Naive thymus-derived CD4-positive, alpha-beta T cell (primary cell): ENCODE measurements at regions of chr11 and their contacts with region 1.

Region 1: DNA sequence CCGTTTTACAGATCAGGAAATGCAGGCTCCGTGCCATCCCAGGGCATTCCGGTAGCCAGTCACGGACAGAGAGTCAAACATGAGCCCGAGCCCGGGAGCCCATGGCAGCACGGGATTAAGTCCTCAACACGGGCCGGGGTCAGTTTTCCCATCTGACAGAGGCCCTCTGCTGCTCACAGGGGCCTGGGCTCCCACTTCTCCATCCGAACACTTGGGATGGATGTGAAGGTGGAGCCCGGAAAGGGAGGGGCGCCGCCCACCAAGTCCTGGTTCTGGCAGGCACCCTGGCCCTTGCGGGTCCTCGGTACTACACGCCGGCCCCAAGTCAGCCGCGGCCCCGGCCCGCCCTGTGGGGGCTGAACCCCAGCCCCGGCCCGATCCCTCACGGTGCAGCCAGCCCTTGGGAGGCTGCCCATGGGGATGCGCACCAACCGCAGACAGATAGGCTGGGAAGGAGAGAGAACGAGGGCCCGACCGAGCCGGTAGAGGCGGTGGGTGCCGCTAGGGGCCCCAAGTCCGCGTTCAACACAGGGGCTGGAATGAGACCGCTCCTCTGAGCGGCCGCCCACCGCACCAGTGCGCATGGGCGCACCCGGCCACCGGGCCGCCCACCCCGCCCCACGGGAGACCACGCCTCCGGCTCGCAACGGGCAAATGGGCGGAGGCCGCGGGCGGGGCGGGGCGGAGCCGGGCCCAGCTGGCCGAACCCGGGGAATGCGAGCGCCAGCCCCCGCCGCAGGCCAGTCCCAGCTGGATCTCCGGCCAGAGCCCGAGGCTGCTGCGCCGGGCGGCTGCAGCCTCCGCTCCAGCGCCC is at the start of gene CAPN5:
- DNase-seq: peak; percentile 72 to 93 (median 85)
- ATAC-seq: peak; percentile 98
- H3K4me3 ChIP-seq: peak within 1 kb of the TSS; percentile 73
- H3K4me3 Mint-ChIP-seq: peak within 1 kb of the TSS; percentile 81 to 95 (median 87)
- H3K27ac ChIP-seq: peak within 1 kb of the TSS; percentile 73
- H3K27ac Mint-ChIP-seq: peak within 1 kb of the TSS in 8 of 9 donors; percentile 49 to 95 (median 82)
- H3K4me1 ChIP-seq: peaks cover 0 to 9% of the 10 kb centered on the region in 2 donors
- H3K4me1 Mint-ChIP-seq: peaks cover 5 to 28% (median 21%) of the 10 kb centered on the region in 7 donors
- H3K27me3 ChIP-seq: no peaks in the 10 kb centered on the region
- H3K27me3 Mint-ChIP-seq: peaks cover 0 to 32% (median 0%) of the 10 kb centered on the region in 5 donors
- total RNA-seq, gene CAPN5: 0.94 to 5.8 (median 5.6) TPM

Region 2: DNA sequence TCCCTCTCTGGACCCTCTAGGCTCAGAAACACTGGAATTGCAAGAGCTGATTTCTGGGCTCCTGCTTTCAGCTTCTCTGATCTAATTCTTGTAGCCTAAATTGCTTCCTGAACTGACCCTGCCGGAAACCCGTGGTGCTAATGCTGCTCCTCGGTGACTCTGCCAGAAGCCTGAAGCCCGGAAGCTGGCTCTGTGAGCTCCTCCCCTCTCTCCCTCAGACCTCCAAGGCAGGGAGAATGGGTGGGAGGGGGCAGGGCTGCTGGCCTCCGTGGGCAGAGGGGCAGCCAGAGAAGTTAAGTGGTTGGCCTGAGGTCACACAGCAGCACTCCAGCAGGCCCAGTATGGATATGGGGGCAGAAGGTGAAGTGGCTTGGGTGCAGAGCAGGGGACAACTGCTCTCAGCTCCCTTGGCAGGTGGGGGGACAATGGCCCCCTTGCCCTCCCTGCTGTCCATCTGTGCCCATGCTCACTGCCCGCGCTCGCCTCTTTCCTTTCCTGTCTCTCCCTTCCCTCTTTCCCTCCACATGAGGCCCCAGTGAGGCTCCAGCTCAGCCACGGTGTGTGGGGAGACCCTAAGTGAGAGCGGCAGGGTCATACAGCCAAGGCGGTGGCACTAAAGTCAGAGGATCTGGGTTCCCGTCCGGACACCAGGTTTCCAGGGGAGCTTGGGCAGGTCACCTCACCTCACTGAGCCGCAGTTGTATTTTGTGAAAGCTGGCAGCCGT is 16.6 kb after region 1 on chr11:
- CTCF ChIA-PET with region 1: interaction called, 4 read pairs
- POLR2A ChIA-PET with region 1: interaction called, 8 read pairs
- intact Hi-C with region 1: loop called (anchors 1 to 2 kb)
- DNase-seq: peak in 8 of 9 donors; percentile 42 to 66 (median 60)
- ATAC-seq: peak; percentile 83
- H3K4me3 ChIP-seq: peak overlapping the region; percentile 44
- H3K4me3 Mint-ChIP-seq: peak overlapping the region; percentile 77 to 93 (median 82)
- H3K27ac ChIP-seq: peak overlapping the region; percentile 78
- H3K27ac Mint-ChIP-seq: peak overlapping the region; percentile 94 to 98 (median 98)
- H3K4me1 ChIP-seq: peaks cover 7 to 17% of the 10 kb centered on the region in 2 donors
- H3K4me1 Mint-ChIP-seq: peaks cover 6 to 37% (median 21%) of the 10 kb centered on the region in 7 donors
- H3K27me3 ChIP-seq: no peaks in the 10 kb centered on the region
- H3K27me3 Mint-ChIP-seq: peaks cover 0 to 5% (median 0%) of the 10 kb centered on the region in 5 donors

Region 3: DNA sequence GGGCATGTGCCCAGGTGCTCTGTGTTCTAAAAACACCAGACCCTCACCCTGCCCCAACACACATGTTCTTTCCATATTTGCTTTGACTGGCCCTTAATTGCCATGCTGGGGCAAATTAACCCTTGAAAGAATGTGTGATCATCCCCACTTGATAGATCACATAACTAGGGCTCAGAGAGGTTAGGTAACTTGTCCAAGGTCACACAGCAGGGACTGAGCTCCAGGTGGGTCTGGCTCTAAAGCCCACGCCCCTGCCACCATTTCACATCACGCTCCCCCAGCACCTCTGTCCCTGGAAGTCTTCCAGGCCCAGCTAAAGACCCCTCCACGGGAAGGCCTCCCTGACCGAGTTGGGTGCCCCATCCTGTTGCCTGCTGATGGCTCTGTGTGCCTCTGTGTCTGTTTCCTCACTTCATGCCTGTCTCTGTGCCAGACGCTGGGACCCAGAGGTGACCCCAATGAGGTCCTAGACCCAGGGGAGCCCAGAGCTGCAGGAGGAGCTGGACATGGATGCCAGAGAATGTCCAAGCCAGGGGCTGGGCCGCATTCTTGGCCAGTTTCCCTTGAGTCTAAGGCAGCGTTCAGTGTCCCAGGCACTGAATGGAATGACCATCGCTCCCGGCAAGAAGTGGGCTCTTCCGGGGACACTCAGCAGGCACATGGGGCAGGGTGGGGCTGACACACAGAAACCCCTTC is 141.3 kb after region 1 on chr11:
- CTCF ChIA-PET with region 1: no interaction called
- POLR2A ChIA-PET with region 1: no interaction called
- intact Hi-C with region 1: no loop called
- DNase-seq: no peak
- ATAC-seq: no peak
- H3K4me3 ChIP-seq: no peak overlapping the region
- H3K4me3 Mint-ChIP-seq: no peak overlapping the region
- H3K27ac ChIP-seq: no peak overlapping the region
- H3K27ac Mint-ChIP-seq: no peak overlapping the region
- H3K4me1 ChIP-seq: no peaks in the 10 kb centered on the region
- H3K4me1 Mint-ChIP-seq: peaks cover 0 to 5% (median 0%) of the 10 kb centered on the region in 7 donors
- H3K27me3 ChIP-seq: no peaks in the 10 kb centered on the region
- H3K27me3 Mint-ChIP-seq: no peaks in the 10 kb centered on the region

Region 4: DNA sequence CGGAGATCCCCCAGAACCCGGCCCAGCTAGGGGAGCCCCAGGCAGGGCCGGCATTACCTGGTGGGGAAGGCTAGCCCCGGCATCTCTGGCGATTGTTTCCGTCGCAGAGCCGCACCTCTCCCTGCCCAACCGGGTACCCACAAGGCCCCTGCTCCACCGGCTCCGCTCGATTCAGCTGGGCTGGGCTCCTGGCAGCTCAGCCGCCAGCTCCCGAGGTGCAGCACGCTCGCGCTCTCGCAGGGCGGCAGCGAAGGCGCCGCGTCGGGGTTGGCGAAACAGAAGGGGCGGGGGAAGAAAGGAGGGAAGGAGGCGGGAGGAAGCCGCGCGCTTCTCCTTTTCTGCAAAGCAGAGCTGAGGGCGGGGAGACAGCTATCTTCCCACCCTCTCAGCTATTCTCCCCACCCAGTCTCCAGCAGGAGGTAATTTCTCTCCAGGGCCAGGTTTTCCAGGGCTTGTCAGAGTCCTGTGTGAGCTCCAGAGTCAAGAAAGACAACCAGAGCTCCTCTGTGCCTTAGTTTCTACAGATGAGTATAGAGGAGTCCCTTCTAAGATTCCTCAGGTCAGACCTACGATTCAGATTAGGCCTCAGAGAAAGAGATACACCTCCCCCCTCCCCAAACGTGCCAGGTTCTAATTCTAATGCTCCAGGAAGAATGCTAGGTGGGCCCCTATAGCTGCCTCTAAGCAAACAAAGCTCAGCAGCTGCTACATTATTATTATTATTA is 345.4 kb after region 1 on chr11:
- CTCF ChIA-PET with region 1: no interaction called
- POLR2A ChIA-PET with region 1: no interaction called
- intact Hi-C with region 1: loop called in 1 of 2 experiments (anchors 5 kb)
- DNase-seq: peak; percentile 64 to 82 (median 78)
- ATAC-seq: peak; percentile 96
- H3K4me3 ChIP-seq: peak overlapping the region; percentile 88
- H3K4me3 Mint-ChIP-seq: peak overlapping the region; percentile 88 to 98 (median 94)
- H3K27ac ChIP-seq: peak overlapping the region; percentile 66
- H3K27ac Mint-ChIP-seq: peak overlapping the region; percentile 65 to 94 (median 82)
- H3K4me1 ChIP-seq: peaks cover 14 to 19% of the 10 kb centered on the region in 2 donors
- H3K4me1 Mint-ChIP-seq: peaks cover 33 to 54% (median 39%) of the 10 kb centered on the region in 7 donors
- H3K27me3 ChIP-seq: no peaks in the 10 kb centered on the region
- H3K27me3 Mint-ChIP-seq: no peaks in the 10 kb centered on the region